Left ventricle myocardium inferior (tissue), 1 donor: ENCODE measurements at regions of chr22 and their contacts with region 1.

Region 1: GRCh38 chr22:20550821-20551744 is 43.7 kb downstream of the MED15 start:
- DNase-seq: no peak
- H3K4me3 ChIP-seq: peak overlapping the region; percentile 27
- H3K27ac ChIP-seq: peak overlapping the region; percentile 95
- H3K4me1 ChIP-seq: peaks cover 88% of the 10 kb centered on the region
- H3K27me3 ChIP-seq: no peaks in the 10 kb centered on the region
- CTCF ChIP-seq: no peak

Region 2: DNA sequence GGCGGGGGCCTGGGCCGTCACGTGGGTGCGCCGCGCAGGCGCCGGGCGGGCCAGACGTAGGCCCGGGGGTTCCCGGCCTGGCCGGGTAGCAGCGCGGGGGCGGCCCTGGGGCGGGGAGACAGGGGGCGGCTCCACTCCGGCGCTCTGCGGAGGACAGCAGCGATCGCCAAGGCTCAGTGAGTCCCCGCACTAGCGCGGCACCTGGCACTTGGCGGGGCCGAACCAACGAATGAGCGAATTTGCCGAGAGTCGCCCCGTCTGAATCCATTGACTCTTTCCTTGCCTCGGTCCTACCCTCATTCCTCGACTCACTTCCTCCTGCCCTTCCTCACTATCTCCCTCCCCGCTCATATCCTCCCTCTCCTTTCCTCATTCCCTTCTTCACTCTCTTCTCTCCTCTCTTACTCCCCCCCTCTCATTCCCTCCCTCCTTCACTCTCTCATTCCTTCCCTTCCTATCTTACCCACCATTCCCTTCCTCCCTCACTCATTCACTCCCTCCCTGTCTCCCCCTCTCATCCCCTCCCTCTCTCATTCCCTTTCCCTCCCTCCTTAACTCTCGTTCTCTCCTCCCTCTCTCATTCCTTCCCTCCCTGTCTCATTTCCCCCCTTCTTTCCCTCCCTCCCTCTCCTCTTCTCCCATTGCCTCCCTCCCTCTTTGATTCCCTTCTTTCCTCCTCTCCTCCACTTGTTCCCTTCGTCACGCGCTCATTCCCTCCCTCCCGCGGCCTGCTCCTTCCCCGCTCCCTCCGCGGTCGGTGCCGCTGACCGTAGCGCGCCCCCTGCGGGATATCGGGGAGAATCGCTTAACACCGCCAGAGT is 55.0 kb before region 1 on chr22:
- intact Hi-C with region 1: loop called (anchors 10 kb)
- DNase-seq: peak; percentile 93
- H3K4me3 ChIP-seq: peak overlapping the region; percentile 74
- H3K27ac ChIP-seq: peak overlapping the region; percentile 94
- H3K4me1 ChIP-seq: peaks cover 35% of the 10 kb centered on the region
- H3K27me3 ChIP-seq: no peaks in the 10 kb centered on the region
- CTCF ChIP-seq: peak; percentile 89